Naive thymus-derived CD4-positive, alpha-beta T cell (primary cell): ENCODE measurements at regions of chr16 and their contacts with region 1.

Region 1: GRCh38 chr16:21626659-21627277 is 25.6 kb downstream of the IGSF6 start:
- DNase-seq: no peak
- ATAC-seq: peak; percentile 92
- H3K4me3 ChIP-seq: peak overlapping the region; percentile 2
- H3K4me3 Mint-ChIP-seq: peak overlapping the region; percentile 30 to 67 (median 52)
- H3K27ac ChIP-seq: no peak overlapping the region
- H3K27ac Mint-ChIP-seq: peak overlapping the region; percentile 62 to 84 (median 66)
- H3K4me1 ChIP-seq: peaks cover 15% of the 10 kb centered on the region in 2 donors
- H3K4me1 Mint-ChIP-seq: peaks cover 15 to 51% (median 41%) of the 10 kb centered on the region in 7 donors
- H3K27me3 ChIP-seq: no peaks in the 10 kb centered on the region
- H3K27me3 Mint-ChIP-seq: no peaks in the 10 kb centered on the region

Region 2: GRCh38 chr16:21638573-21638975 is 11.8 kb after region 1 on chr16:
- CTCF ChIA-PET with region 1: interaction called, 3 read pairs
- POLR2A ChIA-PET with region 1: interaction called, 5 read pairs
- intact Hi-C with region 1: loop called in 1 of 2 experiments (anchors 2 kb)
- DNase-seq: peak in 2 of 9 donors; percentile 16 to 27
- ATAC-seq: peak; percentile 52
- H3K4me3 ChIP-seq: no peak overlapping the region
- H3K4me3 Mint-ChIP-seq: peak overlapping the region in 8 of 10 donors; percentile 2 to 34 (median 14)
- H3K27ac ChIP-seq: peak overlapping the region; percentile 26
- H3K27ac Mint-ChIP-seq: peak overlapping the region; percentile 14 to 90 (median 66)
- H3K4me1 ChIP-seq: peaks cover 17 to 24% of the 10 kb centered on the region in 2 donors
- H3K4me1 Mint-ChIP-seq: peaks cover 9 to 32% (median 24%) of the 10 kb centered on the region in 7 donors
- H3K27me3 ChIP-seq: no peaks in the 10 kb centered on the region
- H3K27me3 Mint-ChIP-seq: no peaks in the 10 kb centered on the region

Region 3: DNA sequence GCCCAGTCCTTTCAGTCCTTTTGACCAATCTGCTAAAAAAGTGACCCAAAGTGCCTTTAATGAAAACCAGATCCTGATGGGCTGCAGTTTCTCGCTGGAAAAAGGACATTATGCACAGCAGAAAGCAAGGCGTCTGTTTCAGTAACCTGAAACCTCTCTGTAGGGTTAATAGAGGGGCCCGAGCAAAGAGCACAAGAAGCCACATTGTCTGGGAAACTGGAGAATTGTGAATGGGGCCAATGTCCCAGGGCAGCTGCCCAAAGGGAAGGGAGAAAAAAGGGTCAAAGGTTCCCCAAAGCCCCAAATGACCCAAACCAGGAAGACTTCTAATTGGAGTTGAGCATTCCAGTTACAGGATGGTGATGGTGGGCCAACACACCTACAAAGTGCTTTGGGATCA is 40.0 kb after region 1 on chr16:
- CTCF ChIA-PET with region 1: no interaction called
- POLR2A ChIA-PET with region 1: no interaction called
- intact Hi-C with region 1: no loop called
- DNase-seq: no peak
- ATAC-seq: no peak
- H3K4me3 ChIP-seq: no peak overlapping the region
- H3K4me3 Mint-ChIP-seq: no peak overlapping the region
- H3K27ac ChIP-seq: no peak overlapping the region
- H3K27ac Mint-ChIP-seq: no peak overlapping the region
- H3K4me1 ChIP-seq: peaks cover 2% of the 10 kb centered on the region in 2 donors
- H3K4me1 Mint-ChIP-seq: peaks cover 0 to 16% (median 5%) of the 10 kb centered on the region in 7 donors
- H3K27me3 ChIP-seq: no peaks in the 10 kb centered on the region
- H3K27me3 Mint-ChIP-seq: peaks cover 0 to 46% (median 4%) of the 10 kb centered on the region in 5 donors